Gastrocnemius medialis (tissue), 4 donors: ENCODE measurements at regions of chr15 and their contacts with region 1.

Region 1: GRCh38 chr15:86135041-86135440 is 55.4 kb downstream of the AGBL1 start:
- DNase-seq: peak; percentile 86 to 88
- ATAC-seq: peak; percentile 97 to 98
- H3K4me3 ChIP-seq: no peak overlapping the region
- H3K27ac ChIP-seq: peak overlapping the region; percentile 75 to 89 (median 81)
- H3K4me1 ChIP-seq: peaks cover 13 to 57% of the 10 kb centered on the region in 2 donors
- H3K27me3 ChIP-seq: no peaks in the 10 kb centered on the region
- CTCF ChIP-seq: peak in 1 of 5 experiments; percentile 19
- POLR2A ChIP-seq: peak; percentile 11 to 30

Region 2: GRCh38 chr15:86079508-86080266 is 55.4 kb before region 1 on chr15 and contains the start of gene AGBL1:
- in situ Hi-C with region 1: no loop called
- intact Hi-C with region 1: loop called (anchors 2 kb)
- DNase-seq: peak; percentile 87 to 98
- ATAC-seq: peak; percentile 78 to 83
- H3K4me3 ChIP-seq: peak within 1 kb of the TSS; percentile 19 to 44 (median 31)
- H3K27ac ChIP-seq: peak within 1 kb of the TSS; percentile 89 to 92 (median 90)
- H3K4me1 ChIP-seq: peaks cover 81 to 85% of the 10 kb centered on the region in 2 donors
- H3K27me3 ChIP-seq: no peaks in the 10 kb centered on the region
- CTCF ChIP-seq: peak in 3 of 5 experiments; percentile 21 to 27 (median 24)
- POLR2A ChIP-seq: peak; percentile 42 to 85
- total RNA-seq, gene AGBL1: 3.8 to 29.7 (median 15.9) TPM

Region 3: DNA sequence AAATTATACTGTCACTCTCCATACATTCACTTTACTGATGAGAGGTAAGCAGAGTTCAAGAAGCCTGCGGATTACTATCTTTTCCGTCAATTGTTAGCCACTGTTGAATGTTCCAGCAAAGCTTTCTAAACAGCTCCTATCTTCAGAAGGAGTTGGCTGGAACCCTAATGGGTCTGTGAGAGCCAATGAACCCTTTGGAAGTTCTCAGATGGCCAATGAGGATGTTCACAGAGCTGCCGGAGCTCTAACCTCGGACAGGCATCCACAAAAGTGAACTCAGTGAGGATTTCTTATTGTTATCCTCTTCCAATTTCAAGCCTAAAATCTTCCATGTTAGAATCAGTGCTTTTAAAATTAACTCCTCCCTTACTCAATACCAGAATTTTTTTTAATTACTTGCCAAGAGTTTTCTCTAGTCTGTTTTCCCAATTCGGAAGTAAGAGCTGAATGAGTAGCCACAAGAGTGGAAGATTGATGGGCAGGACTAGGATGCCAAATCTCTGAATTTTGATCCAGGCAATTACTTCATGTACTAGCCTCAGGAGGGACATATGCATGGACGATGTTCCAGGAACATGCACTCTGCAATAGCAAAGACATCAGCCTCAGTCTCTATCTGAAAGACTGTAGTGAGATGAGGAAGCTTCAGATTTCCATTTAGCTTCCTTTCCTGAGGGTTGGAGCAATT is 22.7 kb after region 1 on chr15:
- in situ Hi-C with region 1: no loop called
- intact Hi-C with region 1: loop called (anchors 1 kb)
- DNase-seq: peak; percentile 66 to 68
- ATAC-seq: peak; percentile 65 to 67
- H3K4me3 ChIP-seq: peak overlapping the region in 3 of 4 donors; percentile 8 to 36 (median 23)
- H3K27ac ChIP-seq: peak overlapping the region; percentile 85 to 98 (median 98)
- H3K4me1 ChIP-seq: peaks cover 45 to 69% of the 10 kb centered on the region in 2 donors
- H3K27me3 ChIP-seq: no peaks in the 10 kb centered on the region
- CTCF ChIP-seq: no peak
- POLR2A ChIP-seq: peak in 1 of 2 donors; percentile 30

Region 4: GRCh38 chr15:86164232-86164898 is 29.3 kb after region 1 on chr15:
- in situ Hi-C with region 1: no loop called
- intact Hi-C with region 1: loop called (anchors 1 kb)
- DNase-seq: peak; percentile 75 to 76
- ATAC-seq: peak; percentile 72 to 81
- H3K4me3 ChIP-seq: no peak overlapping the region
- H3K27ac ChIP-seq: peak overlapping the region; percentile 85 to 98 (median 98)
- H3K4me1 ChIP-seq: peaks cover 63 to 67% of the 10 kb centered on the region in 2 donors
- H3K27me3 ChIP-seq: no peaks in the 10 kb centered on the region
- CTCF ChIP-seq: no peak
- POLR2A ChIP-seq: peak; percentile 56 to 78